AG04449 (cell line): ENCODE measurements at regions of chr2 and their contacts with region 1.

Region 1: DNA sequence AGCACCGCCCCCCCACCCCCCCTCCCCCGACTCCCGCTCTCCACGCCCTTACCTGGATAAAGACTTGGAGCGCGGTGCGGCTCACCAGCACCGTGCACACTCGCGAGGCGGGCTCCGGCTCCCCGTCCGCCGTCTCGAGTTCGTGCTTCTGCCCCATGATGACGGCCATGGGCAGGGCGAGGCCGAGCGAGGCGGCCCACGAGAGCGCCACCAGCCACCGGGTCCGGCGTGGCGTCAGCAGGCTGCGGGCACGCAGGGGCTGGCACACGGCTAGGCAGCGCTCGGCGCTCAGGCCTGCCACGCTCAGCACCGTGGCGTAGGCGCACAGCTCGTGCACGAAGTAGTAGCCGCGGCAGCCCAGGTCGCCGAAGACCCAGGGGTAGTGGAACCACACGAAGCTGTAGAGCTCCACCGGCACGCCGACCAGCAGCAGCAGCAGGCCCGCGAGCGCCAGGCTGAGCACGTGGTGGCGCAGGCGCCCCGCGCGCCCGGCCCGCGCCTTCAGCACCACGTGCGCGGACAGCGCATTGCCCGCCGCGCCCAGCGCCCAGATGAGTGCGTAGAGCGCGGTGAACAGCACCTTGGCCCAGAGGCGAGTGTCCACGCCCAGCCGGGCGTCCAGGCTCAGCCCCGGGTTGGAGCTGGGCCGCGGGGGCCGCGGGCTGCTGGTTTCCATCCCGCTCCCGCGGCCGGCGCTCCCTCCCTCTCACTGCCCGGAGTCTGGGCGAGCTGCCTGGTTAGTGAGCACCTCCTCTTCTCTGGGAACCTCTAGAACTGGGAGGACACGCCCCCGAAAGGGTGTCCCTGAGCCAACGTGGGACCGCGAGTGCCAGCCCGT is at the start of gene NTSR2:
- DNase-seq: no peak
- H3K4me3 ChIP-seq: no peak within 1 kb of the TSS
- CTCF ChIP-seq: no peak

Region 2: DNA sequence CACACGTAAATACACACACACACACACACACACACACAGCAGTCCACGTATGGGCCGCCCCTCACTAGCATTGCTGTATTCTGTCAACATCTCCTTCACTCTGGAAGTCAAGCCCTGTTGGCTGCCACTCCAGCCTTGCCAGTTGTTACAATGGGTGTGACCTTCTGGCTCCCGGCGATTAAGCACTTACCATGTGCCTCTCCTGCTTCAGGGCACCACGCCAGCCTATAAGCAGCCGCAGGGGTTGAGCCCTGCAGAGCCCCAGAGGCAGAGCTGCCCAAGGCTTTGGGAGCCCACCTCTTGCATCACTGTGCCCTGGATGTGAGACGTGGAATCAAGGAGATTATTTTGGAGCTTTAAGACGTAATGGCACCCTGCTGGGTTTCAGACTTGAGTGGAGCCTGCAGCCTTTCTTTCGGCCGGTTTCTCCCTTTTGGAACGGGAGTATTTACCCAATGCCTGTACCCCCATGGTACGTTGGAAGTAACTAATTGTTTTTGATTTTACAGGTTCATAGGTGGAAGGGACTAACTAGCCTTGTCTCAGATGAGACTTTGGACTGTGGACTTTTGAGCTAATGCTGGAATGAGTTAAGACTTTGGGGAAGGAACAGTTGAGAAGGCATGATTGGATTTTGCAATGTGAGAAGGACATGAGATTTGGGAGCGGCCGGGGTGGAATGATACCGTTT is 270.8 kb before region 1 on chr2:
- CTCF ChIA-PET with region 1: no interaction called
- POLR2A ChIA-PET with region 1: no interaction called
- DNase-seq: no peak
- H3K4me3 ChIP-seq: no peak overlapping the region
- CTCF ChIP-seq: no peak

Region 3: DNA sequence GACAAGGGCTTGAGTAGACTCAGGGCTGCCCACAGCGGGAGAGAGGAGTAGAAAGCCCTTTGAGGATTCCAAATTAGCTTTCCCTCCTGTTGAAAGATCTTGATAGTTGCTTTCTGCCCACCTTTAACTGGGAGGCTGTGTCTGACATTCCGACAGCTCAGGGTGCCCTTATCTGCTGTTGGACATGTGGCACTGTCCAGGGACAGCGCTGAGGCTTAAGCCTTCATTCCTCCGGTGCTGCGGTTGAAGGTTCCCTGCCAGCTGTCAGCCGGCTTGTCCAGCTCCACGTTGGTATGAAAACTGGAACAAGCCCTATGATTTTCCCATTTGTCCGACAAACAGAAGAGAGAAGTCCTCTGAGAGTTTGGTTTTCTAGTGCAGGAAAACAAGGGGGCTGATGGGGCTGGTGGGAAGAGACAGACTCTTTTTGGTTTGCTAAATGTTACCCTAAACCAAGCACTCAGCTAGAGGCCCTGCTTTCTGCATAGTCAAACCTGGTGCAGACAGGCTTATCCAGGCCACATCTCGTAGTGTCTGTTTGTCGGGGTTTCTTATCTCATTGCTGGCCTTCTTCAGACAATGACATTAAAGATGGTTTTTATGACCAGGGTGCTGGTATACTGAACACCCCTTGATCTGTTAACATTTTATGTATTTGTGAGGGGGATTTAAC is 111.3 kb before region 1 on chr2:
- CTCF ChIA-PET with region 1: no interaction called
- POLR2A ChIA-PET with region 1: no interaction called
- DNase-seq: no peak
- H3K4me3 ChIP-seq: no peak overlapping the region
- CTCF ChIP-seq: no peak

Region 4: DNA sequence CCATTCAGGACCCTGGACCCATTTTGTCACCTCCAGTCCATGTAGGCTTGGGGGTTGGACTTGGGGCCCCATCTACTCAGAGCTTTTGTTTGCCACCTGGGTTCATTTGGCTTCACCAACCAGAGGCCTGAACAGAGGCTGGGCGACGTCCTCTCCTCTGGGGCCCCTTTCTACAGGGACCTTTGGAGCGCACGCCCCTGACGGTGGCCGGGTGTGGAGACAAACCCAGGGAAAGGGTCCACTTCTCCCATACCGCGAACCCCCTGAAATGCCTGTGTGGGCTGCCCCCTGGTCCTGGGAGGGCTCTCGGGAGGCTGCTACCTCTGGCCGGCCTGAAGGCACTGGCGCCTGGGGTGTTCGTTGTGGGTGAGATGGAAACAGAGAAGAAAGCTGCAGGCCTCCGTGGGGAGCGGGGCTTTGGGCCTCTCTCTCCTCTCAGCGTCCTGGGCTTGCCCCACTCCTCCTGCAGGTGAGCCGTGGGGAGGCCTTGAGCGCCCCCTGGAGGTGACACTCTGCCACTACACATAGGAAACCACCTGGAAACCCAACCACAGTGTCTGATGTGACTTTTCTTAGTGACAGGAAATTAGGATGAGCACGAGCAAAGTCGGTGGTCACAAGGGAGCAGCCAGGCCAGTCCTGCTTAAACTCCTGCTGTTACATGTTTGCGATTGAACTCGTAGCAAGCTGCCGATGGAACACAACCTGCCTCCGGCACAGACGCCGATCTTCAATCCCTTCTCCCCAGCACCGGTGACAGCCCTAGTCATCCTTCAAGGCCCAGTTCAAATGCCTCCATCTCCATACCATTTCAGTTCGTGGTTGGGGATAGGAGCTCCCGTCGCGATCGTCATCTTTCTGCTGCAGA is 12.3 kb after region 1 on chr2:
- CTCF ChIA-PET with region 1: interaction called, 23 read pairs
- POLR2A ChIA-PET with region 1: no interaction called
- DNase-seq: no peak
- H3K4me3 ChIP-seq: no peak overlapping the region
- CTCF ChIP-seq: peak; percentile 83